Activated CD4-positive, alpha-beta T cell treated with anti-CD3 and anti-CD28 coated beads, Interleukin-2, amount 10 ng/mL, durations not matched to agents 24 days and 14 days (primary cell): ENCODE measurements at regions of chr5 and their contacts with region 1.

Region 1: DNA sequence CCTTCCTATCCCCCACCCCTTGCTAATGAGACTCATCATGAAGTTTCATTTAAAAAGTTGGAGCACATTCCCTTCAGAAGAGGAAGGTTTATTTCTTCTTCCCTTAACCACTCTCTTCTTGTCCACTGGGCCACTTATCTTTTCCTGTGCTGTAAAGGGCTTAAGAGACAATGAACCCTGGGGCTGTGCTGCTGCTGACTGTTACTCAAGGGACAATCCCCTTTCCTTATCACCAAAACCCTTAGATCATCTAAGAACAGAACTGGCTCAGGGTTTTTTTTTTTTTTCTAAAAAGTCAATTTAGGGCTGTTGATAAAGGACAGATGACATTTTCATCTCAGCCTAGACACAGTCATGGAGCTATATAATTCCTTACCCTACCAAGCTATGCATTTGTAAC is 29.6 kb downstream of the CAPSL start:
- DNase-seq: no peak
- H3K4me3 Mint-ChIP-seq: no peak overlapping the region
- H3K27ac Mint-ChIP-seq: no peak overlapping the region
- H3K4me1 Mint-ChIP-seq: peaks cover 36% of the 10 kb centered on the region
- H3K27me3 Mint-ChIP-seq: peaks cover 2% of the 10 kb centered on the region

Region 2: DNA sequence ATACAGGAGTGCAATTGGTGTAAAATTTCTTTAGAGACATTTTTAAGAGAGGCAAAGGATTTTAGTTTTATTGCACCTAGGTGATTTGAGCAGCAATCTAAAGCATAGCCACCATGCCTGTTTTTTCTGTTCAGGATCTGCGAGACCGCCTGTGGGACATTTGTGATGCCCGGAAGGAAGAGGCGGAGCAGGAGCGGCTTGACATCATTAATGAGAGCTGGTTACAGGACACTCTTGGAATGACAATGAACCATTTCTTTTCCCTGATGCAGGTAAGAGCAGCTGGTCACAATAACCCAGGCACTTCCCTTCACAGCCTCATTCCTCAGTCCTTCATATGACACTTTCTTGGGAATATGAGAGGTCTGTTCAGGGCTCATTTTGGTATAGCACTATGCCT is 155.3 kb before region 1 on chr5:
- intact Hi-C with region 1: no loop called
- DNase-seq: no peak
- H3K4me3 Mint-ChIP-seq: no peak overlapping the region
- H3K27ac Mint-ChIP-seq: no peak overlapping the region
- H3K4me1 Mint-ChIP-seq: peaks cover 9% of the 10 kb centered on the region
- H3K27me3 Mint-ChIP-seq: no peaks in the 10 kb centered on the region

Region 3: GRCh38 chr5:35919191-35919590 is 10.4 kb after region 1 on chr5:
- intact Hi-C with region 1: loop called (anchors 1 kb)
- DNase-seq: no peak
- H3K4me3 Mint-ChIP-seq: peak overlapping the region; percentile 0
- H3K27ac Mint-ChIP-seq: peak overlapping the region; percentile 69
- H3K4me1 Mint-ChIP-seq: peaks cover 20% of the 10 kb centered on the region
- H3K27me3 Mint-ChIP-seq: no peaks in the 10 kb centered on the region